GM10248 (cell line): ENCODE measurements at regions of chr4 and their contacts with region 1.

Region 1: GRCh38 chr4:155442267-155443105 is 65.7 kb upstream of the MAP9 start:
- DNase-seq: peak; percentile 46
- CTCF ChIP-seq: peak; percentile 86

Region 2: GRCh38 chr4:155342142-155342541 is 100.3 kb before region 1 on chr4:
- CTCF ChIA-PET with region 1: no interaction called
- POLR2A ChIA-PET with region 1: no interaction called
- DNase-seq: no peak
- CTCF ChIP-seq: no peak

Region 3: GRCh38 chr4:155468282-155468681 is 25.8 kb after region 1 on chr4:
- CTCF ChIA-PET with region 1: interaction called, 10 read pairs
- POLR2A ChIA-PET with region 1: interaction called, 4 read pairs
- DNase-seq: no peak
- CTCF ChIP-seq: no peak